Psoas muscle (tissue), 8 donors: ENCODE measurements at regions of chr10 and their contacts with region 1.

Region 1: GRCh38 chr10:96043033-96043932 is at the start of gene CCNJ:
- DNase-seq: peak; percentile 89 to 94
- ATAC-seq: peak; percentile 97 to 99 (median 98)
- H3K4me3 ChIP-seq: peak within 1 kb of the TSS; percentile 93
- H3K27ac ChIP-seq: peak within 1 kb of the TSS; percentile 77
- H3K4me1 ChIP-seq: peaks cover 15% of the 10 kb centered on the region
- H3K27me3 ChIP-seq: no peaks in the 10 kb centered on the region
- CTCF ChIP-seq: peak; percentile 12
- total RNA-seq, gene CCNJ: 3.8 to 5.7 (median 5.2) TPM

Region 2: GRCh38 chr10:94287336-94287735 is 1755.9 kb before region 1 on chr10:
- intact Hi-C with region 1: loop called in 1 of 2 experiments (anchors 5 kb)
- DNase-seq: no peak
- ATAC-seq: no peak
- H3K4me3 ChIP-seq: no peak overlapping the region
- H3K27ac ChIP-seq: no peak overlapping the region
- H3K4me1 ChIP-seq: no peaks in the 10 kb centered on the region
- H3K27me3 ChIP-seq: no peaks in the 10 kb centered on the region
- CTCF ChIP-seq: no peak

Region 3: GRCh38 chr10:96017191-96017687 is 26.0 kb before region 1 on chr10:
- intact Hi-C with region 1: no loop called
- DNase-seq: no peak
- ATAC-seq: peak; percentile 70 to 90 (median 82)
- H3K4me3 ChIP-seq: no peak overlapping the region
- H3K27ac ChIP-seq: no peak overlapping the region
- H3K4me1 ChIP-seq: no peaks in the 10 kb centered on the region
- H3K27me3 ChIP-seq: no peaks in the 10 kb centered on the region
- CTCF ChIP-seq: peak; percentile 75

Region 4: DNA sequence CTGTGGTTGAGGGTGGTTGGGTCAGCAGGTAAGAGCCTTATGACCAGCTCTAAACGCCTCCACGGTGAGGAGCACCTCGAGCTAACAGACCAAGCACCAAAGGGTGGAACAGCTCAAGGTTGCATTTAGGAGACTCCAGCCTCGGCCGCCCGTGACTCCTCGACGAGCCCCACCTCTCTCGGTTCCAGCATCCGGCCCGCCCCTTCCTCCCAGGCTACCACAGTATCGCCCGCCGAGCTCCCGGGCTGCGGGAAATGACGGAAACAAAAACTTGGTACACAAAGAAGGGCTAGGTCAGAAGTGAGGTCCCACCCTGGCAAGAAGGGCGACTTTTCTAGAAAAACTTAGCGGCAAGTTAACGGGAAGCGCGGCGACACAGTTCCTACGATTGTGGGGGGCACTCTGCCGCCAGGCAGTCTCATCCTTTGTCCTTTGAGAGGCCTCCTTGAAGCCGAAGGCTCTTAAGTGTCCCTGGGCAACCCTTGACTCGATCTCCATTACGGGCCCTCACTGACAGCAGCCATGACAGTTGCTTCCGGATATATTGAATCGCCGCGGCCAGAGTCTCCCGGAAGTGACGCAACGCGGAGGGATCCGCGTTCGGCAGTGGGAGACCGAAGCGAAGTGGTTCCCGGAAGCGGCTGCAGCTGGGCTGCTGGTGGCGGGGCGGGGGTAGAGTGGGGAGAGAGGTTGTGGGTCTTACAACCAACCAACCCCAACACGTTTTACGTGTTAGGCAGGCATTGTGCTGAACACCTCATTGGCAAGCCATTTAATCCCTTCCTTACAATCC is 46.6 kb after region 1 on chr10:
- intact Hi-C with region 1: loop called in 1 of 2 experiments (anchors 5 kb)
- DNase-seq: peak; percentile 96
- ATAC-seq: peak; percentile 95 to 99 (median 98)
- H3K4me3 ChIP-seq: peak overlapping the region; percentile 75
- H3K27ac ChIP-seq: peak overlapping the region; percentile 82
- H3K4me1 ChIP-seq: no peaks in the 10 kb centered on the region
- H3K27me3 ChIP-seq: peaks cover 11 to 41% (median 15%) of the 10 kb centered on the region in 3 donors
- CTCF ChIP-seq: no peak